ENCODE measurements at regions of chr1 and their contacts with region 1.

Region 1: GRCh38 chr1:209827384-209828262 is at the start of gene UTP25:
- DNase-seq: peak; percentile 97
- H3K4me3 Mint-ChIP-seq: peak within 1 kb of the TSS; percentile 79
- H3K27ac Mint-ChIP-seq: peak within 1 kb of the TSS; percentile 86
- H3K4me1 Mint-ChIP-seq: peaks cover 34% of the 10 kb centered on the region
- H3K27me3 Mint-ChIP-seq: peaks cover 4% of the 10 kb centered on the region
- total RNA-seq, gene UTP25: 4.1 to 4.6 TPM

Region 2: GRCh38 chr1:209155546-209155945 is 672.1 kb before region 1 on chr1:
- CTCF ChIA-PET with region 1: no interaction called
- intact Hi-C with region 1: no loop called
- DNase-seq: no peak
- H3K4me3 Mint-ChIP-seq: no peak overlapping the region
- H3K27ac Mint-ChIP-seq: no peak overlapping the region
- H3K4me1 Mint-ChIP-seq: no peaks in the 10 kb centered on the region
- H3K27me3 Mint-ChIP-seq: no peaks in the 10 kb centered on the region

Region 3: DNA sequence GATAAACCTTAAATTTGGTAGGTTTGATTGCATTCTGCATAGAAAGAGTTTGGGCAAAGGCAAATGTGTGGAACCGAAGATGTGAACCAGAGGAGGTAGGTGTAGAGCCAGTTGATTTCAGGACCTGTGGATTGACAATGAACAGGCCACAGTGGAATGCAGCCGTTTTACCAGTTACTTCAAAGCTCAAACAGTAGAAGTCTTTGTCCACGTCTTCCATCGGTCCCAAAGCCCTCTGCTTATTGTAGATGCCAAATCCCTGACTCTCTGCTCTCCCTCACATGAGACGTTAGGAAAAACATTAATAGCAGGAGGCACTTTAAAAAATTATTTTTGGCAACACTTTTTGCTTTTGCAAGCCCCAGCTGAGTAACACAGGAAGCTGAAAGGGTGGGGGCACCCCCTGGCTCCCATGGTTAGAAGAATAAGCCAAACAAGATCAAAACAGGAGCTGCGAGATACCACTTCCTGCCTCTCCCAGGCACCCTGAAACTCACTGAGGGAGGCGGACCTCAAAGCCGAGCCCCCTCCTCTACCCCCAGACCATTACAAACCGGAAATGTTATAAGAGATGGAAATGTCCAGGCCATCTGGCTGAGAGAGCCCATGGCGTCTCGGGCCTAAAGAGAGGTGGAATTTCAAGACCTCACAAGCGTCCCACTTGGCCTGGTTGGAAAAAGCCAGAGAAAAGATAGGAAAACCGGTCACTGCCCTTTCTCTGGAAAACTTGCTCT is 58.3 kb before region 1 on chr1:
- CTCF ChIA-PET with region 1: interaction called, 7 read pairs
- intact Hi-C with region 1: loop called (anchors 1 kb)
- DNase-seq: peak; percentile 92
- H3K4me3 Mint-ChIP-seq: no peak overlapping the region
- H3K27ac Mint-ChIP-seq: no peak overlapping the region
- H3K4me1 Mint-ChIP-seq: peaks cover 10% of the 10 kb centered on the region
- H3K27me3 Mint-ChIP-seq: no peaks in the 10 kb centered on the region

Region 4: GRCh38 chr1:209805875-209806760 is 21.5 kb before region 1 on chr1 and contains the start of gene IRF6:
- CTCF ChIA-PET with region 1: interaction called, 25 read pairs
- intact Hi-C with region 1: loop called (anchors 1 kb)
- DNase-seq: peak; percentile 65
- H3K4me3 Mint-ChIP-seq: peak within 1 kb of the TSS; percentile 75
- H3K27ac Mint-ChIP-seq: no peak within 1 kb of the TSS
- H3K4me1 Mint-ChIP-seq: peaks cover 17% of the 10 kb centered on the region
- H3K27me3 Mint-ChIP-seq: peaks cover 5% of the 10 kb centered on the region
- total RNA-seq, gene IRF6: 0.48 to 0.64 TPM

Region 5: DNA sequence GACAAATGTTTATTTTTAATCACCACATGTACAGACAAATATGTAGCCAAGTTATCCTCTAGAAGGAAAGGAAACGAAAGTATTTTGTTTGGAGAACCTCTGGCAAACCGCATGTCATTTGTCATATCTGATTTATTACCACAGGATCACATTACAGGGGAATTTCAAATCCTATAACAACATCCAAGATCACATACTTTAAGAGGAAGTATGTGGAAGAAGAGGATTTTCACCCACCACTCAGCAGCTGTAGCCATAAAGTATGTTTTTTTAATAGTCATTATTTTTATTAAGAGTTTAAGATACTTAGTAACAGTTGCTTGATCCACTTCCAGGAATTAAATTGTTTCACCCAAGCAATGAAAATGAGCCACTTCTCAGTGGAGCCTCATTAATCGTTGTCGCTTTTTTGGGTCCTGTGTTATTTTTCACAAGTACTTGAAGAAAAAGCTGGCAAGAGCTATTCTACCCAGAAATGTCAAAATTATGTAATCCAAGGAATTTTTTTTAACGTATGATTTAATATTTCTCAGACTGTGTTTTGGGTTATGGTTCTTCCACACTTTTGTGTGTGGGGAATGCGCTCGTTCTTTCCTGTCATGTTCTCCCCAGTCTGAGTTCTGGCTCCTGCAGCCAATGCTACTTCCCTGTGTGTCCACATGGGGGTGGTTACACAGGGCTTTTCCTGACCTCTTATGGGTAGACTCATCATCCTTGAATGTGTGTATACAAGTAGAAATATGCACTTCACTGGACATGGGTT is 411.9 kb after region 1 on chr1:
- CTCF ChIA-PET with region 1: no interaction called
- intact Hi-C with region 1: no loop called
- DNase-seq: no peak
- H3K4me3 Mint-ChIP-seq: no peak overlapping the region
- H3K27ac Mint-ChIP-seq: no peak overlapping the region
- H3K4me1 Mint-ChIP-seq: no peaks in the 10 kb centered on the region
- H3K27me3 Mint-ChIP-seq: peaks cover 61% of the 10 kb centered on the region

Region 6: DNA sequence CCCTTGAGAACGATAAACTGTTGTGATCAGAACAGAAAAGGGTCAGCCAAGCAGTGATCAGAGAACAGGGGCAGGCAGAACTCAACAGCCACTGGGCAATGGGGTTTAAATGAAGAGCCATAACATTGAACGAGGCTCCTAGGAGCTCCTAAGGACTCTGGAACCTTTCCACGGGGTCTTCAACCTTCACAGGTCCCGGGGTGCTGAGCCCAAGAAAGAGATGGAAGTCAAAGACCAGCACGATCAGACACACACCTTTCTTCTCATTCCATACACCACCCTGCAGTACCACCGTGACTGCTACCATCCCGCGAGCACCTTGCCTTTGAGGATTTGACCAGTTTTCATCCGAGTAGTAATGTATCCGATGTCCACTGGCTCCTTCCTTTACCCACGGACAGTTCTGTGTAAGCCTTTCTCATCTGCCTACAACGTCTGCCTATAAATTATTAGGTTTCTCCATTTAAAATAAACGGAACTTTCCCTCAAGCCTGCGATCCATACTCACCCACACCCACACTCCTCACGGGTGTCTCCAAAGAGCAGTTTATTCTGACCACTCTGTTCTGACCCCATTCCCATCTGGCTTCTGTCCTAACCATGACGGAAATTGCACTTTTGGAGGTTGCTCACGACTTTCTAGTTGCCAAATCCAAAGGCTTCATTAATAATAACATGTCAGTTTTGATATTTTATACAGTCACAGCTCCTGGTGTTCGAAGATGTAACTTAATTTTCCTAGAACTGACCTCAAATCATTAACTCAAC is 484.3 kb after region 1 on chr1:
- CTCF ChIA-PET with region 1: interaction called, 5 read pairs
- intact Hi-C with region 1: loop called (anchors 1 kb)
- DNase-seq: no peak
- H3K4me3 Mint-ChIP-seq: peak overlapping the region; percentile 79
- H3K27ac Mint-ChIP-seq: no peak overlapping the region
- H3K4me1 Mint-ChIP-seq: peaks cover 4% of the 10 kb centered on the region
- H3K27me3 Mint-ChIP-seq: peaks cover 20% of the 10 kb centered on the region

Measured in activated naive CD4-positive, alpha-beta T cell treated with anti-CD3 and anti-CD28 coated beads for 36 hours (primary cell).